Activated T-helper 2 cell treated with anti-CD3 and anti-CD28 coated beads, Interferon-gamma antibody, Interleukin-2, Interleukin-4, amounts not matched to agents 10 μg/mL and 5 μg/mL and 100 μg/mL, durations not matched to agents 14 hours and 24 hours and 36 hours (primary cell): ENCODE measurements at regions of chr15 and their contacts with region 1.

Region 1: DNA sequence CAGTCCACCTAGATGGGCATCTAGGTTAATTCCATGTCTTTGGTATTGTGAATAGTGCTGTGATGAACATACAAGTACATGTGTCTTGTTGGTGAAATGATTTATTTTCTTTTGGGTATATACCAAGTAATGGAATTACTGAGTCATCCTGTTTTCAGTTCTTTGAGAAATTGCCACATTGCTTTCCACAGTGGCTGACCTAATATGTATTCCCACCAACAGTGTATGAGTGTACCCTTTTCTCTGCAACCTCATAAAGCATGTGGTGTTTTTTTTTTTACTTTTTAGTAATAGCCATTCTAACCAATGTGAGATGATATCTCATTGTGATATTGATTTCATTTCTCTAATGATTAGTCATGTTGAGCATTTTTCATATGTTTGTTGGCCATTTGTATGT is 86.0 kb upstream of the NDN start:
- DNase-seq: no peak
- H3K4me3 Mint-ChIP-seq: no peak overlapping the region
- H3K27ac Mint-ChIP-seq: no peak overlapping the region
- H3K4me1 Mint-ChIP-seq: no peaks in the 10 kb centered on the region
- H3K27me3 Mint-ChIP-seq: no peaks in the 10 kb centered on the region

Region 2: GRCh38 chr15:23793191-23793680 is 20.1 kb after region 1 on chr15:
- intact Hi-C with region 1: no loop called
- DNase-seq: no peak
- H3K4me3 Mint-ChIP-seq: no peak overlapping the region
- H3K27ac Mint-ChIP-seq: no peak overlapping the region
- H3K4me1 Mint-ChIP-seq: no peaks in the 10 kb centered on the region
- H3K27me3 Mint-ChIP-seq: no peaks in the 10 kb centered on the region

Region 3: GRCh38 chr15:23823508-23823907 is 50.4 kb after region 1 on chr15:
- intact Hi-C with region 1: loop called (anchors 10 kb)
- DNase-seq: no peak
- H3K4me3 Mint-ChIP-seq: no peak overlapping the region
- H3K27ac Mint-ChIP-seq: no peak overlapping the region
- H3K4me1 Mint-ChIP-seq: no peaks in the 10 kb centered on the region
- H3K27me3 Mint-ChIP-seq: no peaks in the 10 kb centered on the region